AG04450 (cell line): ENCODE measurements at regions of chr1 and their contacts with region 1.

Region 1: GRCh38 chr1:110460253-110461220 is 9.6 kb downstream of the PROK1 start:
- DNase-seq: peak; percentile 50
- H3K4me3 ChIP-seq: no peak overlapping the region
- H3K27ac ChIP-seq: no peak overlapping the region
- H3K27me3 ChIP-seq: peaks cover 7% of the 10 kb centered on the region
- CTCF ChIP-seq: peak; percentile 98

Region 2: DNA sequence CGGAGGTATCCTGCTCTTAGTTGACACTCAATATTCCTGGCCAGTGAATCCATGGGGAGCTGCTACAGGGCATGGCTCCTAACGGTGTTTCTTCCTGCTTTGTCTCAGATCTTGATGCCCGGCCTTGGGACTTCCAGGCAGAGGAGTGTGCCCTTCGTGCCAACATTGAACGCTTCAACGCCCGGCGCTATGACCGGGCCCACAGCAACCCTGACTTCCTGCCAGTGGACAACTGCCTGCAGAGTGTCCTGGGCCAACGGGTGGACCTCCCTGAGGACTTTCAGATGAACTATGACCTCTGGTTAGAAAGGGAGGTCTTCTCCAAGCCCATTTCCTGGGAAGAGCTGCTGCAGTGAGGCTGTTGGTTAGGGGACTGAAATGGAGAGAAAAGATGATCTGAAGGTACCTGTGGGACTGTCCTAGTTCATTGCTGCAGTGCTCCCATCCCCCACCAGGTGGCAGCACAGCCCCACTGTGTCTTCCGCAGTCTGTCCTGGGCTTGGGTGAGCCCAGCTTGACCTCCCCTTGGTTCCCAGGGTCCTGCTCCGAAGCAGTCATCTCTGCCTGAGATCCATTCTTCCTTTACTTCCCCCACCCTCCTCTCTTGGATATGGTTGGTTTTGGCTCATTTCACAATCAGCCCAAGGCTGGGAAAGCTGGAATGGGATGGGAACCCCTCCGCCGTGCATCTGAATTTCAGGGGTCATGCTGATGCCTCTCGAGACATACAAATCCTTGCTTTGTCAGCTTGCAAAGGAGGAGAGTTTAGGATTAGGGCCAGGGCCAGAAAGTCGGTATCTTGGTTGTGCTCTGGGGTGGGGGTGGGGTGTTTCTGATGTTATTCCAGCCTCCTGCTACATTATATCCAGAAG is 406.7 kb before region 1 on chr1:
- CTCF ChIA-PET with region 1: interaction called, 13 read pairs
- POLR2A ChIA-PET with region 1: no interaction called
- DNase-seq: no peak
- H3K4me3 ChIP-seq: no peak overlapping the region
- H3K27ac ChIP-seq: no peak overlapping the region
- H3K27me3 ChIP-seq: no peaks in the 10 kb centered on the region
- CTCF ChIP-seq: peak; percentile 98

Region 3: GRCh38 chr1:110196917-110197765 is 263.4 kb before region 1 on chr1:
- CTCF ChIA-PET with region 1: interaction called, 571 read pairs
- POLR2A ChIA-PET with region 1: no interaction called
- DNase-seq: no peak
- H3K4me3 ChIP-seq: no peak overlapping the region
- H3K27ac ChIP-seq: no peak overlapping the region
- H3K27me3 ChIP-seq: peaks cover 3% of the 10 kb centered on the region
- CTCF ChIP-seq: peak; percentile 97

Region 4: GRCh38 chr1:110243574-110243973 is 217.0 kb before region 1 on chr1:
- CTCF ChIA-PET with region 1: no interaction called
- POLR2A ChIA-PET with region 1: no interaction called
- DNase-seq: no peak
- H3K4me3 ChIP-seq: no peak overlapping the region
- H3K27ac ChIP-seq: no peak overlapping the region
- H3K27me3 ChIP-seq: peaks cover 16% of the 10 kb centered on the region
- CTCF ChIP-seq: no peak

Region 5: GRCh38 chr1:110319332-110320152 is 141.0 kb before region 1 on chr1:
- CTCF ChIA-PET with region 1: interaction called, 13 read pairs
- POLR2A ChIA-PET with region 1: no interaction called
- DNase-seq: no peak
- H3K4me3 ChIP-seq: no peak overlapping the region
- H3K27ac ChIP-seq: no peak overlapping the region
- H3K27me3 ChIP-seq: peaks cover 10% of the 10 kb centered on the region
- CTCF ChIP-seq: no peak

Region 6: GRCh38 chr1:110393691-110394564 is 66.6 kb before region 1 on chr1:
- CTCF ChIA-PET with region 1: interaction called, 12 read pairs
- POLR2A ChIA-PET with region 1: no interaction called
- DNase-seq: peak; percentile 62
- H3K4me3 ChIP-seq: no peak overlapping the region
- H3K27ac ChIP-seq: peak overlapping the region; percentile 69
- H3K27me3 ChIP-seq: no peaks in the 10 kb centered on the region
- CTCF ChIP-seq: no peak

Region 7: DNA sequence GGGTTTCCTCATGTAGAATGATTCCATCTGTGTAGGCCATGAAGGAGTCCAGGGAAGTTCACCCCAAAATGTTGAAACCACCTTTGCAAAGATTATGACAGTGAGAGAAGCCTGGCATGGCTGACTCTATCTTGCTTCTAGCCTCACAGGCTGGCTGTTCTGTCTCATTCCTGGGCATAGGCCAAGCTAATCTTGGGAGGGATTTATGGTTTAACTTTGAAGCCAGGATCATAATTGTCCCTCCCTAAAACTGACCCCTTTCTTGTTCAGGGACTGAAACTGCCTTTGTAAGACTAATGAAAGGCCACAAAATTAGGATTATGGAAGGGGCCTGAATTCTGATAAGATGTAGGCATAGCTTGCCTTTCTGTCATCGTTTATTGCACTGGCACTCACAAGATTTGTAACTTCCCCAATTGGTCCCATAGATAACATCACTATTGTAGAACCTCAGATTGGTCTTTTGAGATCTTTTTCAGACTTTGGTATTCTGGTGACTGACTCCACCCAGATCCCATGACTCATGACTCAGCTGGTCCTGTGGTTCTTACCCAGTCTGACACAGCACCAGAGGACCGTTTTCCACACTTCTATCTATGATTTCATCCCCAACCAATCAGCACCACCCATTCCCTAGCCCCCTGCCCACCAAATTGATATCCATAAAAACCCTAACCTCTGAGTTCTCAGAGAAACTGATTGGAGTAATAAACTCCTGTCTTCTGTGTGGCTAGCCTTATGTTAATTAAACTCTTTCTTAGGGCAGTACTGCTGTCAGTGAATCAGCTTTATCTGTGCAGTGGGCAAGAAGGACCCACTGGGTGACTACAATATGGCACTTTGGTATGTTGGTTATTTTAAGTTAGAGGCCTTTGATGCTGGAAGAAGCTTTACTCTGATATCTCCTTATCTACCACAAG is 39.4 kb before region 1 on chr1:
- CTCF ChIA-PET with region 1: interaction called, 378 read pairs
- POLR2A ChIA-PET with region 1: no interaction called
- DNase-seq: no peak
- H3K4me3 ChIP-seq: no peak overlapping the region
- H3K27ac ChIP-seq: no peak overlapping the region
- H3K27me3 ChIP-seq: peaks cover 26% of the 10 kb centered on the region
- CTCF ChIP-seq: no peak

Region 8: DNA sequence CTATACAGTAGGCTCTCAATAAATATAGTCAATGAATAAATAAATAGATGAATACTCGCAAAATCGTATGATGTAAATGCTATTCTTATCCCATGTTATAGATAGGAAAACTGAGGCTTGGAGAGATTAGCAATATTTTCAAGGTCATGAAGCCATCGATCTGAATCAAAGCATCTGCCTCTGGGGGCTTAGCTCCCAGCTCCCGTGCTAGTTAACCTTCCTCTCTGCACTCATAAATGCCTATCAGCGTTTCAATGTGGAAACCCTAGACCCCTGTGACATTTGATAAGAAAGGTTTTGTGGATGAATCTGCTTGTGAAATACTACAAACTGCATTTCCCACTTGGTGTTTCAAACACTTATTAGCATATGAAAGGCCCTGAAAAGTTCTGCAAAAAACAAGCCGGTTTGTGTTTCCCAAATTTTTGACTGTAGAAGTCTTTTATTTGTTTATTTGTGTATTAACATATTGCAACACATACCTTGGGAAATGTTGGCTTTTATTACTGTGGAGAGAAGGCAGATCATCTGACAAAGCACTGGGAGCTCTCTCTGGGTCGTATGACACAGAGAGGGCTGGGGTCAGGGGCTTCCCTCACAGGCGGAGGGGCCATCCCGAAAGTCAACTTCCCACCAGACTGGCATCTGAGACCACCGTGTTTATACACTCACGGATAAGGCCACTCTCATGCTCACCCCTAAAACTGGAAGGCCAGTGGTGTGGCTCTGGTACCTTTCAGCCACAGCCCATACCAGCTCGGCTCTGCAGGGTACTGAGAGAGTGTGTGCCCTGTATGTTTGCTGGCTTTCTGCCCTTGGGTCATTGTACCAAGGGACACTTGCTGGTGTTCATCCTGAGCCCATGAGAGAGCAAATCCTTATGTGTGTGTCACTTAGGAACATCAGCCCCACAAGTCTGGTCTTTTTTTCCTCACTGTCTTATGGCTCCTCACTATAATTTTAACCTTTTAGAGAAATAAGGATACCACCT is 10.6 kb before region 1 on chr1:
- CTCF ChIA-PET with region 1: interaction called, 27 read pairs
- POLR2A ChIA-PET with region 1: no interaction called
- DNase-seq: no peak
- H3K4me3 ChIP-seq: no peak overlapping the region
- H3K27ac ChIP-seq: no peak overlapping the region
- H3K27me3 ChIP-seq: peaks cover 71% of the 10 kb centered on the region
- CTCF ChIP-seq: no peak

Region 9: DNA sequence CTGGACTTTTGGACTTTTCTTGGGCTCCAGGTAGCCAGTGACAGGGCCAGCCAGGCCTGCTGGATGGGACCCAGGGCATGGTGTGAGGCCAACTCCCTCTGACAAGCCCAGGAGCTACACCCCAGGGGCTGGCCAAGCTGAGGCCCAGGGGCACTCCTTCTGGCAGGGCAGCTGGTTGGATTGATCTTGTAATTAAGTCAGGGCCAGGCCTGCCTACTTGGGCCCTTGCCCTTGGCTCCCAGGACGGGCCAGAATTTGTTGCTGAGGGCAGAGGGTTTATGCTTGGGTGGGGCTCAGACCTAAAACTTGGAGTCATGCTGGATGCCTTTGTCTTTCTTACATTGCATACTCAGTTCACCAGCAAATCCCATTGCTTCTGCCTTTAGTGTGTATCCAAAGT is 124.9 kb after region 1 on chr1:
- CTCF ChIA-PET with region 1: no interaction called
- POLR2A ChIA-PET with region 1: no interaction called
- DNase-seq: no peak
- H3K4me3 ChIP-seq: no peak overlapping the region
- H3K27ac ChIP-seq: no peak overlapping the region
- H3K27me3 ChIP-seq: no peaks in the 10 kb centered on the region
- CTCF ChIP-seq: no peak